PC-9 (cell line): ENCODE measurements at regions of chrX and their contacts with region 1.

Region 1: DNA sequence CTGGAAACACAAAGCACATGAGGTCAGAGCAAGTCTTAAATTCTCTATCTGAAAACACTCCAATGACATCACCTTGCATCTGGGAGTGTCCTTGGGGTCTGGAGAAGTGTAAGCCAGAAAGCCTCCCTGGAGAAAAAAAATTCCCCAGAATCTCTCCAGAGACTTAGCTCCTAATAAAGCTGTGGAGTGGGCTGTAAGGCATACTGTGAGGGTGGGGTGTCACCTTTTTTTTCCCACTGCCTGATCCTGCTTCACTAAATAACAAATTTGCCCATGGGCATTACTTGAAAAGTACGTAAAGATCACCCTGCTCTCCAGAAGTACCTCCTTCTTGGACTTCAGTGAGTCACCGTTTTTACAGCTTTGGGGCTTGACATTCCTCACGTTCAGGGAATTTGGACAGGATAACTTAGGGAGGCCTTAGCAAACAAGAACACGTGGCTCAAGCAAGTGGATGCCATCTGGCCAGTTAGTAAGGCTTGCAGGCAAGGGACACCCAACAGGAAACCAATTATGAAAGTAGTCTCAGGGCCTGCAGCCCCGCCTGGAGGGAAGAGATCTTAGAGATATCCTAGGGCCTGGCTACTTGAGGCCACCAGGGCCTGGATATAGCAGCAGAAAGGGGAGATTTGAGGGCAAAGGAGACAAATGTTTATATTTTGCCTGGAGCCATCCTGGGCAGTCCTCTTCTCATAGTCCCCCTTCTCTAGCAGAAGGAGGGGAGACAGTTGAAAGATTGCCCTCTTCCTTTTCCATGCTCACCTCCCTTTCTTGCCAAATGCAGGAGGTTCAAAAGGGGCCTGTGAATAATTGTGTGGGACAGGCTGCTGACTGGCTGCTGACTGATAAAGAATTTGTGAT is 60.1 kb upstream of the PLAC1 start:
- DNase-seq: peak; percentile 85 to 100
- H3K4me3 ChIP-seq: no peak overlapping the region
- H3K27ac ChIP-seq: peak overlapping the region; percentile 64
- H3K4me1 ChIP-seq: peaks cover 26% of the 10 kb centered on the region
- H3K27me3 ChIP-seq: no peaks in the 10 kb centered on the region
- CTCF ChIP-seq: peak; percentile 24; the same call in 1 of the 2 replicates

Region 2: GRCh38 chrX:134512566-134512965 is 205.8 kb before region 1 on chrX:
- CTCF ChIA-PET with region 1: no interaction called
- POLR2A ChIA-PET with region 1: no interaction called
- intact Hi-C with region 1: loop called (anchors 2 kb)
- DNase-seq: peak; percentile 72 to 95
- H3K4me3 ChIP-seq: no peak overlapping the region
- H3K27ac ChIP-seq: peak overlapping the region; percentile 63
- H3K4me1 ChIP-seq: peaks cover 12% of the 10 kb centered on the region
- H3K27me3 ChIP-seq: no peaks in the 10 kb centered on the region
- CTCF ChIP-seq: no peak